ENCODE measurements at regions of chr16 and their contacts with region 1.

Region 1: GRCh38 chr16:29848420-29849297 is 14.4 kb downstream of the CDIPT start:
- DNase-seq: peak; percentile 85
- H3K4me3 Mint-ChIP-seq: no peak overlapping the region
- H3K27ac Mint-ChIP-seq: peak overlapping the region; percentile 65
- H3K4me1 Mint-ChIP-seq: no peaks in the 10 kb centered on the region
- H3K27me3 Mint-ChIP-seq: no peaks in the 10 kb centered on the region
- CTCF ChIP-seq: peak; percentile 90

Region 2: GRCh38 chr16:29729116-29729521 is 119.5 kb before region 1 on chr16:
- CTCF ChIA-PET with region 1: no interaction called
- intact Hi-C with region 1: no loop called
- DNase-seq: peak; percentile 20
- H3K4me3 Mint-ChIP-seq: no peak overlapping the region
- H3K27ac Mint-ChIP-seq: no peak overlapping the region
- H3K4me1 Mint-ChIP-seq: peaks cover 14% of the 10 kb centered on the region
- H3K27me3 Mint-ChIP-seq: peaks cover 13% of the 10 kb centered on the region
- CTCF ChIP-seq: peak; percentile 59

Region 3: GRCh38 chr16:29807426-29808228 is 41.0 kb before region 1 on chr16:
- CTCF ChIA-PET with region 1: interaction called, 21 read pairs
- intact Hi-C with region 1: no loop called
- DNase-seq: peak; percentile 91
- H3K4me3 Mint-ChIP-seq: peak overlapping the region; percentile 72
- H3K27ac Mint-ChIP-seq: peak overlapping the region; percentile 96
- H3K4me1 Mint-ChIP-seq: peaks cover 34% of the 10 kb centered on the region
- H3K27me3 Mint-ChIP-seq: peaks cover 11% of the 10 kb centered on the region
- CTCF ChIP-seq: peak; percentile 30

Region 4: GRCh38 chr16:29891525-29892457 is 43.1 kb after region 1 on chr16:
- CTCF ChIA-PET with region 1: no interaction called
- intact Hi-C with region 1: no loop called
- DNase-seq: no peak
- H3K4me3 Mint-ChIP-seq: no peak overlapping the region
- H3K27ac Mint-ChIP-seq: no peak overlapping the region
- H3K4me1 Mint-ChIP-seq: no peaks in the 10 kb centered on the region
- H3K27me3 Mint-ChIP-seq: no peaks in the 10 kb centered on the region
- CTCF ChIP-seq: no peak

Region 5: DNA sequence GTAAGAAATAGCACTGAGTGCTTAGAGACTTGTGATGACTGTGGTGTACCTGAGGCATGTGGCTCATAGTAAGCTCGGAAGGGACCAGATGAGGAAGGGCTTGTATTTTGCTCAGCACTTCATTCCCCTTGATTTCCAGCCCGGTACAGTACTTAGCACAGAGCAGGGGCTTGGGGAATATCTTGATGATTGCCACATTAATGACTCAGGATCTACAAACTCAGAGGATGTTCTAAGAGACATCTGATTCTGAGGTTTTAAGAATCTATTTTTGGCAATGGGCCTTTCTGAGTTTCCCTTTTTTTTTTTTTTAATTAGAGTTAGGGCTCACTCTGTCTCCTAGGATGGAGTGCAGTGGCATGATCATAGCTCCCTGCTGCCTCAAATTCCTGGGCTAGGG is 60.7 kb after region 1 on chr16:
- CTCF ChIA-PET with region 1: no interaction called
- intact Hi-C with region 1: no loop called
- DNase-seq: no peak
- H3K4me3 Mint-ChIP-seq: no peak overlapping the region
- H3K27ac Mint-ChIP-seq: no peak overlapping the region
- H3K4me1 Mint-ChIP-seq: peaks cover 16% of the 10 kb centered on the region
- H3K27me3 Mint-ChIP-seq: no peaks in the 10 kb centered on the region
- CTCF ChIP-seq: no peak

Region 6: GRCh38 chr16:29989111-29989832 is 140.6 kb after region 1 on chr16:
- CTCF ChIA-PET with region 1: interaction called, 17 read pairs
- intact Hi-C with region 1: no loop called
- DNase-seq: no peak
- H3K4me3 Mint-ChIP-seq: no peak overlapping the region
- H3K27ac Mint-ChIP-seq: no peak overlapping the region
- H3K4me1 Mint-ChIP-seq: peaks cover 7% of the 10 kb centered on the region
- H3K27me3 Mint-ChIP-seq: no peaks in the 10 kb centered on the region
- CTCF ChIP-seq: no peak

Measured in Calu3 (cell line).